ENCODE measurements at regions of chr6 and their contacts with region 1.

Region 1: DNA sequence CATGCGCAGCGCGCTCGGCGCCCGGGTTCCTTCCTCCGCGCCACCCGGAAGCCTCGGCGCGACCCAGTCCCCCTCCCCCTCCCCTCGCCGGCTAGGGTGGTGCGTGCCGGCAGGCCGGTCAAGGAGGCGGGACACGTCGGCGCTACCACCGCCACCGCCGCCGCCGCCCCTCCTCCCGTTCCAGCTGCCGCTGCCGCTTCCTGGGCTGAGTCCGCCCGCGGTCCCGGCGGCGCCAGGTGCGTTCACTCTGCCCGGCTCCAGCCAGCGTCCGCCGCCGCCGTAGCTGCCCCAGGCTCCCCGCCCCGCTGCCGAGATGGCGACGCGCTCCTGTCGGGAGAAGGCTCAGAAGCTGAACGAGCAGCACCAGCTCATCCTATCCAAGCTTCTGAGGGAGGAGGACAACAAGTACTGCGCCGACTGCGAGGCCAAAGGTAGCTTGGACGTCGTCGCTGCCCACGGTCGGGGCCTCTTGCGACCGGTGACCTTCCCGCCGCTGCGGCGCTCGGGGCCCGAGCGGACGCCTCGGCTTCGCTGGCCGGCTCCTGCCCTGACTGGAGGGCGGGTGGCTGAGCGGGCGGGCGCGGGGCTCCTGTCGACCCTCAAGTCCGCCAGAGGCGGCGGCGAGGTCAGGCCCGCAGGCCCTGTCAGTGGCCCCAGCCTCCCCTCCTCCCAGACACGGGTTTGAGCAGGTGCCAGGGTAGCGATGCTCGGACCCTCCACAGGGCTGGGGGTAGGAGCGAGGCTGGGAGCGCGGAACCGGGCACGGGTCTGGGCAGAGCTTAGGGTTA is at the start of gene SMAP1:
- DNase-seq: peak; percentile 97
- ATAC-seq: peak; percentile 93
- H3K4me3 Mint-ChIP-seq: peak within 1 kb of the TSS; percentile 95
- H3K27ac Mint-ChIP-seq: peak within 1 kb of the TSS; percentile 94
- H3K4me1 Mint-ChIP-seq: peaks cover 54% of the 10 kb centered on the region
- H3K27me3 Mint-ChIP-seq: no peaks in the 10 kb centered on the region
- total RNA-seq, gene SMAP1: 24.8 to 31.5 TPM

Region 2: GRCh38 chr6:70413114-70413991 is 254.6 kb before region 1 on chr6 and contains the start of gene FAM135A:
- CTCF ChIA-PET with region 1: interaction called, 3 read pairs
- POLR2A ChIA-PET with region 1: no interaction called
- intact Hi-C with region 1: loop called (anchors 1 to 5 kb)
- DNase-seq: peak; percentile 99
- ATAC-seq: peak; percentile 95
- H3K4me3 Mint-ChIP-seq: peak within 1 kb of the TSS; percentile 82
- H3K27ac Mint-ChIP-seq: peak within 1 kb of the TSS; percentile 89
- H3K4me1 Mint-ChIP-seq: peaks cover 26% of the 10 kb centered on the region
- H3K27me3 Mint-ChIP-seq: peaks cover 2% of the 10 kb centered on the region
- total RNA-seq, gene FAM135A: 7.6 to 7.8 TPM

Region 3: DNA sequence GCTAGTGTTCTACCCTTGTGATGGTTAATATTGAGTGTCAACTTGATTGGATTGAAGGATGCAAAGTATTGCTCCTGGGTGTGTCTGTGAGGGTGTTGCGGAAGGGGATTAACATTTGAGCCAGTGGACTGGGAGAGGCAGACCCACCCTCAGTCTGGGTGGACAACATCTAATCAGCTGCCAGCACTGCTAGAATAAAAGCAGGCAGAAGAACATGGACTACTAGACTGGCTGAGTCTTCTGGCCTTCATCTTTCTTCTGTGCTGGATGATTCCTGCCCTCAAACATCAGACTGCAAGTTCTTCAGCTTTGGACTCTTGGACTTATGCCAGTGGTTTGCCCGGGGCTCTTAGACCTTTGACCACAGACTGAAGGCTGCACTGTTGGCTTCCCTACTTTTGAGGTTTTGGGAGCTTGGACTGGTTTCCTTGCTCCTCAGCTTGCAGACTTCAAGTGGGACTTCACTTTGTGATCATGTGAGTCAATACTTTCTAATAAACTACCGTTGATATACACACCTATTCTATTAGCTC is 51.1 kb before region 1 on chr6:
- CTCF ChIA-PET with region 1: no interaction called
- POLR2A ChIA-PET with region 1: no interaction called
- intact Hi-C with region 1: no loop called
- DNase-seq: no peak
- ATAC-seq: no peak
- H3K4me3 Mint-ChIP-seq: no peak overlapping the region
- H3K27ac Mint-ChIP-seq: no peak overlapping the region
- H3K4me1 Mint-ChIP-seq: no peaks in the 10 kb centered on the region
- H3K27me3 Mint-ChIP-seq: peaks cover 4% of the 10 kb centered on the region

Region 4: GRCh38 chr6:70633870-70634269 is 34.0 kb before region 1 on chr6:
- CTCF ChIA-PET with region 1: no interaction called
- POLR2A ChIA-PET with region 1: no interaction called
- intact Hi-C with region 1: loop called in 1 of 2 experiments (anchors 2 kb)
- DNase-seq: no peak
- ATAC-seq: peak; percentile 49
- H3K4me3 Mint-ChIP-seq: no peak overlapping the region
- H3K27ac Mint-ChIP-seq: no peak overlapping the region
- H3K4me1 Mint-ChIP-seq: no peaks in the 10 kb centered on the region
- H3K27me3 Mint-ChIP-seq: no peaks in the 10 kb centered on the region

Region 5: GRCh38 chr6:70686548-70687133 is 18.7 kb after region 1 on chr6:
- CTCF ChIA-PET with region 1: interaction called, 63 read pairs
- POLR2A ChIA-PET with region 1: interaction called, 6 read pairs
- intact Hi-C with region 1: loop called in 1 of 2 experiments (anchors 1 kb)
- DNase-seq: no peak
- ATAC-seq: no peak
- H3K4me3 Mint-ChIP-seq: no peak overlapping the region
- H3K27ac Mint-ChIP-seq: no peak overlapping the region
- H3K4me1 Mint-ChIP-seq: peaks cover 38% of the 10 kb centered on the region
- H3K27me3 Mint-ChIP-seq: no peaks in the 10 kb centered on the region